ENCODE measurements at regions of chr11 and their contacts with region 1.

Region 1: GRCh38 chr11:78564490-78565467 is 9.9 kb downstream of the NARS2 start:
- DNase-seq: no peak
- ATAC-seq: peak; percentile 67

Region 2: DNA sequence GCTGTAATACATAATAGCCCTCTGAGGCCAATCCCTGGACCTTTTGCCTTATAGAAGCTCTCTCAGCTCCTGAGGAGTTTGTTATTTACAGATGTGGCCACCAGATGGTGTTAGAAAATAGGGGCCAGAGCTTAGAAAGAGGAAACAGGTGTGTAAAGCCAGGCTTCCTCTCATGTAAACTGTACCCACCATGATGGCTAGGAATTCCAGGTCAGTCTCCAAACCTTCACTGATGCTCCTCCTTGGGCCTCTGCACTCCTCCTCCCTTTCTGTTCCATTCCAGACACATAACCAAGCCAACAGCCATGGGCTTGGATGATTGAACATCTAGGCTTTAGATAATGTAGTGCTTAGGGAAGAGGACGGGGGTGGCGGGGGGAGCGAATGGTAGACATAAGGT is 336.3 kb before region 1 on chr11:
- intact Hi-C with region 1: loop called (anchors 10 kb)
- DNase-seq: no peak
- ATAC-seq: peak; percentile 75

Region 3: DNA sequence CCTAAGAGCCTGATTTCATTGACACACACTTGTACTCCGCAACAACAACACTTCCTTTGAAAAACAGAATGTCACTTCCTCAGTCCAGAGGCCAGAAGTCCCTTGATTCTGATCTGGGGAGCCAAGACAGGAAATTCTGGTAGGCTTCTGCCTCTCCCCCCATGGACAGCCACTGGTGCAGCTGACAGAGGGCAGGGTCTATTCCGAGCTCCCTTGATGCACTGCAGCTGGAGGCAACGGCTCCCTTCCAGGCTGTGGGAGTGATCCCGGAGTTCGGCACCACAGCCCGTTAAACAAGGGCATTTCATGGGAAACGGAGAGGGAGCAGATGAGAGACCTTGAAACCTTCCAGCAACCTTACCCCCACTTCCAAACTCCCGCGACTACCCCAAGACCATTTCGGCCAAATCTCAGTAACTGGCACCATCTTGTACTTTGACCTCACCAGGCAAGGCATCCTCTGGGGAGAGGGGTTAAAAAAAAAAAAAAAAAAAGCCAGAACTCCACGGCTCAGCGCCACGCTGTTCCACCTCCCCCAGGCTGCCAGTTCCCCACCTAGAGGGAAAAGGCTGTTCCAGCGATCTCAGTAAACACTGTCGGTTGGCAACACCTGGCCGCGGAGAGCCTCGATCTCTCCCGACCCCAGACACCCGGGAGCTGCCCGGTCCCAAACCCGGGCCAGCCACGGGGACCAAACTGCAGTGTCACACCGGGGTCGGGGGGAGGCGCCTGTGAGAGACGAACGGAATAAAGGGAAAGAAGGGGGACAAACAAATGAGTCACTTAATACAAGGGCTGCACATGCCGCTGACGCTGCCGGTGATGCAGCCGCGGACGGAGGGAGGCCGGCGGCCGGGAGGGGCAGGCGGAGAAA is 148.2 kb before region 1 on chr11:
- intact Hi-C with region 1: loop called (anchors 10 kb)
- DNase-seq: peak; percentile 87
- ATAC-seq: peak; percentile 78